GM12878 (cell line): ENCODE measurements at regions of chrX and their contacts with region 1.

Region 1: GRCh38 chrX:109856974-109857373 is 123.9 kb upstream of the ACSL4 start:
- DNase-seq: no peak
- ATAC-seq: peak; percentile 51
- H3K4me3 ChIP-seq: no peak overlapping the region
- H3K27ac ChIP-seq: no peak overlapping the region
- H3K4me1 ChIP-seq: no peaks in the 10 kb centered on the region
- H3K27me3 ChIP-seq: no peaks in the 10 kb centered on the region
- CTCF ChIP-seq: peak; percentile 62 to 76 (median 63)
- EP300 ChIP-seq: 0 out of 4 replicates have a peak, but pooled peaks of 1 of the 2 experiments have one; percentile 34
- POLR2A ChIP-seq: no peak
- RAD21 ChIP-seq: peak; percentile 81

Region 2: GRCh38 chrX:109190542-109190941 is 666.4 kb before region 1 on chrX:
- CTCF ChIA-PET with region 1: no interaction called
- POLR2A ChIA-PET with region 1: no interaction called
- RAD21 ChIA-PET with region 1: no interaction called
- SMC1A ChIA-PET with region 1: no interaction called
- in situ Hi-C with region 1: no loop called
- intact Hi-C with region 1: no loop called
- DNase-seq: no peak
- ATAC-seq: peak; percentile 49
- H3K4me3 ChIP-seq: no peak overlapping the region
- H3K27ac ChIP-seq: peak overlapping the region; percentile 24; the same call in 1 of the 2 replicates
- H3K4me1 ChIP-seq: peaks cover 4% of the 10 kb centered on the region; the same call in 1 of the 2 replicates
- H3K27me3 ChIP-seq: no peaks in the 10 kb centered on the region
- CTCF ChIP-seq: no peak
- EP300 ChIP-seq: peak in 1 of 2 experiments; percentile 24; a peak in 1 of 4 replicates
- POLR2A ChIP-seq: no peak
- RAD21 ChIP-seq: no peak

Region 3: DNA sequence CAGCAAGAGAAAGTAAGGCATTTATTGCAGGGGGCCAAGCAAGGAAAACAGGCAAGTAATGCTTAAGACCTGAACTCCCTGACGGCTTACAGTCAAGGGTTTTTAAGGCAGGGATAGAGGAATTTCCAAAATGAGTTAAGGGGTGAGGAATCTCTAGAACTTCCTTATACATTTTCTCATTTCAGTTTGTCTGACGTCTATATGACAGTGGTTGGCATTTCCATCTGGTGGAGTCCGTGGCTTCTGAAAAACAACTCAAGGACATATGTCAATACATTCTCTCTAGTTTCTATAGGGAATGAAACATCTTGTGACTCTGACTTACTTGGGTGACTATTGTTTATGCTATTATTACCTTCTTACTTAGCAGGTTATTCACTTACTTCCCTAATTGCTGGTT is 355.8 kb before region 1 on chrX:
- CTCF ChIA-PET with region 1: no interaction called
- POLR2A ChIA-PET with region 1: no interaction called
- RAD21 ChIA-PET with region 1: no interaction called
- SMC1A ChIA-PET with region 1: no interaction called
- in situ Hi-C with region 1: no loop called
- intact Hi-C with region 1: no loop called
- DNase-seq: no peak
- ATAC-seq: no peak
- H3K4me3 ChIP-seq: no peak overlapping the region
- H3K27ac ChIP-seq: no peak overlapping the region
- H3K4me1 ChIP-seq: no peaks in the 10 kb centered on the region
- H3K27me3 ChIP-seq: no peaks in the 10 kb centered on the region
- CTCF ChIP-seq: no peak
- EP300 ChIP-seq: no peak
- POLR2A ChIP-seq: no peak
- RAD21 ChIP-seq: no peak

Region 4: DNA sequence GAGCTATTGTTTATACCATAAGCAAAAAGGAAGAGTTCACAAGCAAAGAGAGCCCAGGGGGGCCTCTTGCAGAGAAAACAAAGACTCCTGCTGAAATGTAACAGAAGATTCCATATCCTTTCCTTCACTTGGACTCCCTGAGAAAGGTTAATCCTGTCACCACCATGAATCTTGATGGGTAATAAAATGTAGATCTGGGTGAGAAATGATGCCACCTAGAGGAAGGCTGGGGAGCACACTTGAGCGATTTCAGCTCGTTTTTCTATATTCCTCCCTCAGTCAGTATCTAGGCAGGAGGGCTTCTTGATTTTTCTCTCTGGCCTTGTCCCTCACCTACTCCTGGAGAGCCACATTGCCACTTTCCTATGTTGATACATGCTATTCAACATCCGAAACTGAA is 221.8 kb before region 1 on chrX:
- CTCF ChIA-PET with region 1: interaction called, 30 read pairs
- POLR2A ChIA-PET with region 1: no interaction called
- RAD21 ChIA-PET with region 1: interaction called, 5 read pairs
- SMC1A ChIA-PET with region 1: interaction called, 4 read pairs
- in situ Hi-C with region 1: no loop called
- intact Hi-C with region 1: no loop called
- DNase-seq: no peak
- ATAC-seq: peak; percentile 86
- H3K4me3 ChIP-seq: no peak overlapping the region
- H3K27ac ChIP-seq: no peak overlapping the region
- H3K4me1 ChIP-seq: no peaks in the 10 kb centered on the region
- H3K27me3 ChIP-seq: no peaks in the 10 kb centered on the region
- CTCF ChIP-seq: peak; percentile 44 to 69 (median 50); a peak in 4 of 6 replicates
- EP300 ChIP-seq: no peak
- POLR2A ChIP-seq: no peak
- RAD21 ChIP-seq: peak; percentile 26

Region 5: DNA sequence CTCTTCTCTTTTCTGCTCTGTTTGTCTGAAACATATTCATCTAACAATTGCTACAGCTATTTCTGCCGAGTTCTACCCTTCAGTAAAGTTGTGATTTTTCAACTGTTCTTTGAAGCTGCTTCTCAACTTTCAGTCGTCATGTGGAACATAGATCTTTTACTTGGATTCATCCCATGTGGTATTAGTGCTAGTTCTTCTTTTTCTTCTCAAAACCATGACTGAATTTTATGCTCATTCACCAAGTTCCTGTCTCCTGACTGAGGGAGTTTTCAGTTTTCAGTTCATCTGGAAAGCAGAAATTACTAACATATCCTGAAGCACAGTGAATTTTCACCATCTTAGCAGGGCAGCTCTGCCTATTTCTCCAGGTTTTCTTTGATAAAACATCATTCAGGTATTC is 136.0 kb before region 1 on chrX:
- CTCF ChIA-PET with region 1: interaction called, 337 read pairs
- POLR2A ChIA-PET with region 1: interaction called, 4 read pairs
- RAD21 ChIA-PET with region 1: interaction called, 257 read pairs
- SMC1A ChIA-PET with region 1: interaction called, 403 read pairs
- in situ Hi-C with region 1: loop called (anchors 5 kb)
- intact Hi-C with region 1: no loop called
- DNase-seq: no peak
- ATAC-seq: peak; percentile 31
- H3K4me3 ChIP-seq: no peak overlapping the region
- H3K27ac ChIP-seq: no peak overlapping the region; the same call in 1 of the 2 replicates
- H3K4me1 ChIP-seq: peaks cover 10% of the 10 kb centered on the region
- H3K27me3 ChIP-seq: no peaks in the 10 kb centered on the region
- CTCF ChIP-seq: no peak
- EP300 ChIP-seq: no peak
- POLR2A ChIP-seq: no peak
- RAD21 ChIP-seq: no peak

Region 6: DNA sequence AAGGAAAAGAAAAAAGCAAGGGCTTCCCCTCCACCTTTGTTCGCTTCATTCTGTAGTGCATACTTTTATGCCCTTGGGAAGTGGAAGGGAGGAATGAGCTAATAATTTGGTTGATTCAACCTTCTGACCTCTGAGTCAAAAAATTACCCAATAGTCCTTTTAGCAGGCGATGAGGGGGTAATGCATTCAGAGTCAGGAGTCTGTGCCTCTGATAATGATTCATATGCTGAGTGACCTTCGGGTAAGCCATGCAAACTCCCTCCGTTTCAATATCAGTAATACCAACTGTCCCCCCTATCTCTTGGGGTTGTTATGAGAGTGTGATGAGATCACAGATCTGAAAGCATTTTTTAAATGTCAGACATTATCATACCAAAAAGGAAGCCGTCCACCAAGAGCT is 82.3 kb before region 1 on chrX:
- CTCF ChIA-PET with region 1: interaction called, 10 read pairs
- POLR2A ChIA-PET with region 1: interaction called, 3 read pairs
- RAD21 ChIA-PET with region 1: interaction called, 33 read pairs
- SMC1A ChIA-PET with region 1: interaction called, 12 read pairs
- in situ Hi-C with region 1: no loop called
- intact Hi-C with region 1: no loop called
- DNase-seq: peak; percentile 50
- ATAC-seq: peak; percentile 97
- H3K4me3 ChIP-seq: no peak overlapping the region
- H3K27ac ChIP-seq: 0 out of 2 replicates have a peak overlapping the region, but pooled peaks have one; percentile 12
- H3K4me1 ChIP-seq: peaks cover 6% of the 10 kb centered on the region; the same call in 1 of the 2 replicates
- H3K27me3 ChIP-seq: no peaks in the 10 kb centered on the region
- CTCF ChIP-seq: no peak
- EP300 ChIP-seq: peak; percentile 64 to 85; a peak in 2 of 4 replicates
- POLR2A ChIP-seq: no peak
- RAD21 ChIP-seq: no peak

Region 7: GRCh38 chrX:109830704-109831206 is 26.2 kb before region 1 on chrX:
- CTCF ChIA-PET with region 1: interaction called, 6 read pairs
- POLR2A ChIA-PET with region 1: interaction called, 4 read pairs
- RAD21 ChIA-PET with region 1: interaction called, 14 read pairs
- SMC1A ChIA-PET with region 1: interaction called, 6 read pairs
- in situ Hi-C with region 1: no loop called
- intact Hi-C with region 1: no loop called
- DNase-seq: no peak
- ATAC-seq: peak; percentile 80
- H3K4me3 ChIP-seq: no peak overlapping the region
- H3K27ac ChIP-seq: no peak overlapping the region
- H3K4me1 ChIP-seq: no peaks in the 10 kb centered on the region
- H3K27me3 ChIP-seq: no peaks in the 10 kb centered on the region
- CTCF ChIP-seq: no peak
- EP300 ChIP-seq: no peak
- POLR2A ChIP-seq: no peak
- RAD21 ChIP-seq: no peak

Region 8: DNA sequence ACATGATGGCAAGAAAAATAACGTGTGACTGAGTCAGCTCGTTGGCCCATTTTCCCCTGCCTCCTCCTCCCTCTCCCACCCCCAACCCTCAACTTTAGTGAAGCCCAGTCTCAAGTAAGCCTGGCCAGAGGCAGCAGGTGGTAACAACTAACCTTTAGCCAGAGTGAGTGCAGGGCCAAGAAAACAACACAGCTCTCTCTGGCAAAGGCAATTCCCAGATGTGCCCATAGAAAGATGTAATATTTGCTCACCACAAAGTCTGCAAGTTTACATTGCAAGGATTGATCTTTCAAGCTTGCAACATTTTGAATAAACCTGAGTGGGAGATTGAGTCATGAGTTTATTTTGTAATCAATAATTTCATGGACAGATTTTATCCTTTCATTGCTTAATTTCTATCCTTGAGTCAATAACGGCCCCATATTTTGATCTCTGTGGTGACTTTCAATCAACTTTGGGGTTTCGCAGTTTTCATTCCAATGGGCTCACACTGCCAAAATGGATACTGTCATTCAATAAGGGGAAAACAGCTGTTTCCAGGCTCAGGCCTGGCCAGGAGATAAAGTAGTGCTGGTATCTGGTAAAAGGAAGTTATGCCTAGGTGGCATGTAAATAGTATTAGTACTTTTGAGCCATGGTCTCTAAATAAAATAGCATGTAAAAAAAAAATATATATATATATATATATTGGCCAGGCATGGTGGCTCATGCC is 15.2 kb after region 1 on chrX:
- CTCF ChIA-PET with region 1: interaction called, 78 read pairs
- POLR2A ChIA-PET with region 1: no interaction called
- RAD21 ChIA-PET with region 1: interaction called, 5 read pairs
- SMC1A ChIA-PET with region 1: interaction called, 17 read pairs
- in situ Hi-C with region 1: no loop called
- intact Hi-C with region 1: no loop called
- DNase-seq: no peak
- ATAC-seq: no peak
- H3K4me3 ChIP-seq: no peak overlapping the region
- H3K27ac ChIP-seq: no peak overlapping the region
- H3K4me1 ChIP-seq: no peaks in the 10 kb centered on the region
- H3K27me3 ChIP-seq: no peaks in the 10 kb centered on the region
- CTCF ChIP-seq: no peak
- EP300 ChIP-seq: no peak
- POLR2A ChIP-seq: no peak
- RAD21 ChIP-seq: no peak

Region 9: DNA sequence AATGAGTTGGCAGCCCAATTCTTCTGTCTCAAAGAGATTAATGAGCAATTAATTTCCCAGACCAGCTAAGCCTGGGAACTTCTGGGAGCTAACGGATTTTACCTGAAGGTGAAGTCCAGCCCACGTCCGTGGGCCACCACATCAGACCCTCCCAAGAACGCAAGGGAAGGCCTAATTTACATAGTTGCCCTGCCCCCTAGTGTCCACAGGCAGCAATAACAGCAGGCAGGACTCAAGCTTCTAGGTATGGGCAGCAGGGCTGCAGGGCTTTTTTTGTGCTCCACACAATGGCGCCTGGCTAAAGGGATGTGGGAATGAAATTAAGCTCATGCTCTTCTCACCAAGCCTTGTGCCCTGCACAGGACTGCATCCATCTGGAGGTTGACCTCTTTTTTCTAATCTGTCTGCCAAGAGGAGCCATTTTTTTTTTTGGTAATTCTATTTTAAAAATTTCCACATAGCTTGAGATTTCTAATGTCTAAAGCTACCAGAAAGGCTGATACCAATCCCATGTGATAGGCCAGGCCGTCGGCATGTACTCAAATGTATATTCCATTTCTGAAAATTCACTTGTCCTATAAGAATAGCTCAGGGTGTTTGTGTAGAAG is 34.0 kb after region 1 on chrX:
- CTCF ChIA-PET with region 1: interaction called, 37 read pairs
- POLR2A ChIA-PET with region 1: interaction called, 3 read pairs
- RAD21 ChIA-PET with region 1: interaction called, 21 read pairs
- SMC1A ChIA-PET with region 1: interaction called, 35 read pairs
- in situ Hi-C with region 1: no loop called
- intact Hi-C with region 1: loop called (anchors 2 kb)
- DNase-seq: no peak
- ATAC-seq: peak; percentile 77
- H3K4me3 ChIP-seq: no peak overlapping the region
- H3K27ac ChIP-seq: no peak overlapping the region
- H3K4me1 ChIP-seq: peaks cover 16% of the 10 kb centered on the region
- H3K27me3 ChIP-seq: no peaks in the 10 kb centered on the region
- CTCF ChIP-seq: peak; percentile 85 to 96 (median 94)
- EP300 ChIP-seq: no peak
- POLR2A ChIP-seq: no peak
- RAD21 ChIP-seq: peak; percentile 81